ENCODE measurements at regions of chr15 and their contacts with region 1.

Region 1: GRCh38 chr15:69729161-69729748 is 276.6 kb downstream of the RPLP1 start:
- DNase-seq: peak; percentile 65 to 90 (median 76)
- ATAC-seq: peak; percentile 58
- H3K4me3 ChIP-seq: no peak overlapping the region
- H3K4me3 Mint-ChIP-seq: no peak overlapping the region
- H3K27ac ChIP-seq: no peak overlapping the region
- H3K27ac Mint-ChIP-seq: no peak overlapping the region
- H3K4me1 ChIP-seq: peaks cover 23% of the 10 kb centered on the region
- H3K4me1 Mint-ChIP-seq: peaks cover 17% of the 10 kb centered on the region
- H3K27me3 ChIP-seq: no peaks in the 10 kb centered on the region
- H3K27me3 Mint-ChIP-seq: no peaks in the 10 kb centered on the region
- CTCF ChIP-seq: peak; percentile 96

Region 2: GRCh38 chr15:69475769-69476358 is 253.4 kb before region 1 on chr15:
- CTCF ChIA-PET with region 1: interaction called, 4 read pairs
- POLR2A ChIA-PET with region 1: no interaction called
- intact Hi-C with region 1: loop called in 1 of 2 experiments (anchors 5 kb)
- DNase-seq: peak; percentile 55 to 85 (median 70)
- ATAC-seq: peak; percentile 95
- H3K4me3 ChIP-seq: no peak overlapping the region
- H3K4me3 Mint-ChIP-seq: no peak overlapping the region
- H3K27ac ChIP-seq: no peak overlapping the region
- H3K27ac Mint-ChIP-seq: no peak overlapping the region
- H3K4me1 ChIP-seq: peaks cover 10% of the 10 kb centered on the region
- H3K4me1 Mint-ChIP-seq: peaks cover 3% of the 10 kb centered on the region
- H3K27me3 ChIP-seq: peaks cover 0 to 2% of the 10 kb centered on the region in 2 experiments
- H3K27me3 Mint-ChIP-seq: no peaks in the 10 kb centered on the region
- CTCF ChIP-seq: peak; percentile 97

Region 3: GRCh38 chr15:69755551-69756310 is 26.5 kb after region 1 on chr15:
- CTCF ChIA-PET with region 1: interaction called, 5 read pairs
- POLR2A ChIA-PET with region 1: interaction called, 5 read pairs
- intact Hi-C with region 1: loop called in 1 of 2 experiments (anchors 2 kb)
- DNase-seq: peak; percentile 29 to 88 (median 68)
- ATAC-seq: peak; percentile 57
- H3K4me3 ChIP-seq: peak overlapping the region; percentile 15
- H3K4me3 Mint-ChIP-seq: peak overlapping the region; percentile 73
- H3K27ac ChIP-seq: no peak overlapping the region
- H3K27ac Mint-ChIP-seq: peak overlapping the region; percentile 77
- H3K4me1 ChIP-seq: peaks cover 71% of the 10 kb centered on the region
- H3K4me1 Mint-ChIP-seq: peaks cover 94% of the 10 kb centered on the region
- H3K27me3 ChIP-seq: no peaks in the 10 kb centered on the region
- H3K27me3 Mint-ChIP-seq: peaks cover 6% of the 10 kb centered on the region
- CTCF ChIP-seq: no peak

Region 4: DNA sequence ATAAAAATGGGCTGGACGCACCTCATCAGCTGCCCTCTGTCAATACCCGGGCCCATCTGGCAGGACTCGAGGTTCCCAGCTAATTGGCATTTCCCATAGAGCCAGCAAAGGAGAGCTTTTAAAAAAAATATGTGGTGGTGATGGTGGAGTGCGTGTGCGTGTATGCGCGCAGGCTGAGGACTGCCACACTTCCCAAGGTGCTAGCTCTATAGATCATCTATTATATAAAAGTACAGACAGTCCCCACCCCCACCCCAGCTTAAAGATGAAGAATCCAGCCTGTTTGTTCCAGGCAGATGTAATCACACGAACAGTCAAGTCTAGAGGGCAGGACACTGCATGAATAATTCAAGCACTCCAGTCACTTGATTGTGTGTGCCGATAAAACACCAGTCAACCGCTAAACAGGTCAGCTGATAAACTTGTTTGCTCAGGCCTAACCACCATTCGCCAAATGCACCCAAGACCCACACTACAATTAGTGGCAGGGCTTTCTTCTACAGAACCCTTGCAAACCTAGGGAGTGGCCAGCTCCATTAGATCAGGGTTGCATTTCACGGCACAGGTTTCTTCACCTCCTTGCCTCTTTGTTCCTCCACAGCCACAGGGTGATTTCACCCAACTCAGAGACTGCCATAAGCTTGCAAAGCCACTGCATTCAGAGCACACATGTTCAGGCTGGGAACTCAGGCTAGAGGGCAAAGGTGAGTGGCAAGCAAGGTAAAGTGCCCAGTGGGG is 362.6 kb after region 1 on chr15:
- CTCF ChIA-PET with region 1: no interaction called
- POLR2A ChIA-PET with region 1: no interaction called
- intact Hi-C with region 1: loop called (anchors 2 to 5 kb)
- DNase-seq: peak in 4 of 14 experiments; percentile 23 to 52 (median 31)
- ATAC-seq: no peak
- H3K4me3 ChIP-seq: no peak overlapping the region
- H3K4me3 Mint-ChIP-seq: peak overlapping the region; percentile 58
- H3K27ac ChIP-seq: no peak overlapping the region
- H3K27ac Mint-ChIP-seq: no peak overlapping the region
- H3K4me1 ChIP-seq: peaks cover 82% of the 10 kb centered on the region
- H3K4me1 Mint-ChIP-seq: peaks cover 87% of the 10 kb centered on the region
- H3K27me3 ChIP-seq: no peaks in the 10 kb centered on the region
- H3K27me3 Mint-ChIP-seq: no peaks in the 10 kb centered on the region
- CTCF ChIP-seq: no peak

Region 5: GRCh38 chr15:70461992-70462391 is 732.7 kb after region 1 on chr15:
- CTCF ChIA-PET with region 1: interaction called, 5 read pairs
- POLR2A ChIA-PET with region 1: no interaction called
- intact Hi-C with region 1: loop called (anchors 1 to 2 kb)
- DNase-seq: no peak
- ATAC-seq: no peak
- H3K4me3 ChIP-seq: no peak overlapping the region
- H3K4me3 Mint-ChIP-seq: no peak overlapping the region
- H3K27ac ChIP-seq: no peak overlapping the region
- H3K27ac Mint-ChIP-seq: no peak overlapping the region
- H3K4me1 ChIP-seq: peaks cover 15% of the 10 kb centered on the region
- H3K4me1 Mint-ChIP-seq: peaks cover 10% of the 10 kb centered on the region
- H3K27me3 ChIP-seq: no peaks in the 10 kb centered on the region
- H3K27me3 Mint-ChIP-seq: no peaks in the 10 kb centered on the region
- CTCF ChIP-seq: no peak

Measured in CD4-positive, alpha-beta T cell (primary cell).